ENCODE measurements at regions of chr10 and their contacts with region 1.

Region 1: DNA sequence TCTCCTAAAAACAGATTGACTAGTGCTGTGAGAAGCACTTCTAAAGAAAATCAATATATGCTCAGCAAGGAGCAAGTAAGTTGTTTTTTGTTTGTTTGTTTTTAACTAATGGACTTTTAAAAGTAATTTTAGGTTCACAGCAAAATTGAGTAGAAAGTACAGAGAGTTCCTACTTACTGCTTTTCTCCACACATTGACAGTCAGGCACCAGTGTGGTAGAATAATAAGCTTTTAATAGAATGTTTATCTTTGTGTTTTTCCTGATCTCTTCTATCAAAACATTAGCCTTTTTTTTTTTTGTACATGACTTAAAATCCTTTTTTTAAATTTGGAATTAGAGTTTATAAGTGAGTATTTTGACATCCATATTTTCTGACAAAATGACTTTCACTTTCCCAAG is 28.0 kb downstream of the MINPP1 start:
- DNase-seq: no peak
- ATAC-seq: no peak
- H3K4me3 ChIP-seq: no peak overlapping the region
- H3K27ac ChIP-seq: no peak overlapping the region
- H3K4me1 ChIP-seq: no peaks in the 10 kb centered on the region; the same call in 1 of the 2 replicates
- H3K27me3 ChIP-seq: no peaks in the 10 kb centered on the region
- CTCF ChIP-seq: no peak

Region 2: DNA sequence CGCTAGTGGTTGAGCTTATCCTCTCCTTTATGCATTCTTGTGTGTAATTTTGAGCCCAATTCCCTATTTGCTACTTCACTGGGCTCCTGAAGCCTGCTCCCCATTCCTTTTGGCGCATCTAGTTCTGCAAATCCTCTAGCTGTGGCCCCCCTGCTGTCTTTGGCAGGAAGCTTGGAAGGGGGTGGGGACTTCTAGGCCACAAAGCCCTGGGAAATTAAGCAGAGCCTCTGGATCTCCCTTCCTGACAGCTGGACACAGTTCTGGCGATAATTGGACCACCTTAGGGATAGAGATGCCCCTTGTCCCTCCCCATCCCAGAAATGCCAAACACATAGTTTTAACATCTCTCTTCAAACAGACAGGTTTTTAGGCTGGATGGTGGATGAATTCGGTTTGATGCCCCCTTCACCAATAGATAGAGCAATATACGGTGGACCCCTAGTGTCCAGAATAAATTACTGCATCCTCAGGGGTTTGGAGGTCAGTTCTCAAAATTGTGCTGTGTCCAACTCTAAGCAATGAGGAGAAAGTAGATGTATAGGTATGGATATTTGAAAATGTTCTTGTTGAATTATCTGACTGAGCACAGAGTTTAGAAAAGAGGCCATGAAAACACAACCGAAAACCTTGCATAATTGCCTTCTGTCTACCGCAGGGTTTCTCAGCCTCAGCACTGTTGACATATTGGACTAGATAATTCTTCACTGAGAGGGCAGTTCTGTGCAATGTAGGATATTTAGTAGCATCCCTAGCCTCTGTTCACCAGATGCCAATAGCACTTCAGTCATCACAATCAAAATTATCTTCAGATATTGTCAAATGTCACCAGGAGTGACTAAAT is 202.5 kb after region 1 on chr10:
- CTCF ChIA-PET with region 1: interaction called, 8 read pairs
- POLR2A ChIA-PET with region 1: no interaction called
- intact Hi-C with region 1: loop called (anchors 1 kb)
- DNase-seq: peak; percentile 64
- ATAC-seq: peak; percentile 70
- H3K4me3 ChIP-seq: no peak overlapping the region
- H3K27ac ChIP-seq: no peak overlapping the region
- H3K4me1 ChIP-seq: peaks cover 11% of the 10 kb centered on the region; the same call in 1 of the 2 replicates
- H3K27me3 ChIP-seq: no peaks in the 10 kb centered on the region
- CTCF ChIP-seq: peak; percentile 87